ENCODE measurements at regions of chr6 and their contacts with region 1.

Region 1: DNA sequence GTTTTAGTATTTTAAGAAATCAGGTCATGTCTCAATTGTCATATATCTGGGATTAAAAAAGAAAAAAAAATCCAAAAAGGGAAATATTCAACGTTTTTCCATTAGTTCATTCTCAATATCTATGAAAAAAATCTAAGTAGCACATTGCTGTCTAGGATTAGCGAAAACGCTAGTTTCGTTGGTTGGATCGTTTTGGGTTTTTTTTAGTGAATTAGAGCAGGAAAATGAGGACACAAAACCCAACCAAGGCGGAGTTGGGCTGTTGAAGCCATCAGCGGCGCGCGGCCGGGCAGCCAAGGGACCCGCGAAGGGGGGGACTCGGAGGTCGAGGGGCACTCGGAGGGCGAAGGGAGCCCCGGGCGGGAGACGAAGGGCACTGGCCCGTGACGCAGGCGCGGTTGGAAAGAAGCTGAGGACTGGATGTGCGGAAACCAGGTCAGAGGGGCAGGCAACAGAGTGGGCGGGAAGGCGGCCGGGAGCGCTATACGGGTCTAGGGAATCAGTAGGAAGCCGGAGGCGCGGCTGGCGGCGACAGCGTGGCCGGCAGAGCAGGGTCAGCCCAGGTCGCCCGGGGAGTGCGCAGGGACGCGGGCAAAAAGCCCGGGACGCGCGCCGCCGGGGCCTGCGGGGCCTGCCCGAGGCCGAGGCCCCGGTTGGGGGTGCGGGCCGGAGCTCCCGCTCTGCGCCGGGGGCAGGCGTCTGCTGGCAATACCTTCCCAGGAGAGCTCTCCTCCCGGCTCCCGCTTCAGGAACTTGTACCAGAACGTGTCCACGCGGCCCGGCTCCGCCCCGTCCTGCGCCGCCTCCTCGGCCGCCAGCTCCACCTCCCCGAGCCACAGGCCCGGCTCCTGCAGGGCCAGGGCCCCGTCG is 599 bp downstream of the EPM2A start:
- DNase-seq: peak; percentile 70 to 88
- H3K4me3 ChIP-seq: peak overlapping the region; percentile 99
- H3K27ac ChIP-seq: peak overlapping the region; percentile 89
- H3K4me1 ChIP-seq: peaks cover 14% of the 10 kb centered on the region
- H3K27me3 ChIP-seq: no peaks in the 10 kb centered on the region
- CTCF ChIP-seq: no peak

Region 2: GRCh38 chr6:145745861-145746260 is 11.1 kb after region 1 on chr6:
- CTCF ChIA-PET with region 1: no interaction called
- POLR2A ChIA-PET with region 1: interaction called, 10 read pairs
- intact Hi-C with region 1: no loop called
- DNase-seq: no peak
- H3K4me3 ChIP-seq: no peak overlapping the region
- H3K27ac ChIP-seq: peak overlapping the region; percentile 27; the same call in 1 of the 2 replicates
- H3K4me1 ChIP-seq: peaks cover 31% of the 10 kb centered on the region
- H3K27me3 ChIP-seq: no peaks in the 10 kb centered on the region
- CTCF ChIP-seq: no peak

Region 3: DNA sequence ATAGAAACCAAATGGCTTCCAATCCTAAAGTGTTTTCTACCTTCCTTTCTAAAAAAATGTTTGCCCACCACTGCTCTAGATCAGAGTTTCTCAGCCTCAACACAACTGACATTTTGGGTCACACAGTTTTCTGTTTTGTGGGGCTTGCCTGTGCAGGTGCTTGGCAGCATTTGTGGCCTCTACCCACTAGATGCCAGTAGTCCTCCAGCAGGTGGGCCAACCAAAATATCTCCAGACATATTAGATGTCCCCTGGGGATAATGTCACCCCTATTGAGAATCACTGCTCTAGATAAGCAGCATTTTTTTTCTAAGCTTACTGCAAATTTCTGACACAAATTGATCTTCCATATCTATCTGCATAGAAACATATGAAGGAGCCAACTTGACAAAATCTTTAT is 26.9 kb after region 1 on chr6:
- CTCF ChIA-PET with region 1: no interaction called
- POLR2A ChIA-PET with region 1: no interaction called
- intact Hi-C with region 1: no loop called
- DNase-seq: no peak
- H3K4me3 ChIP-seq: no peak overlapping the region
- H3K27ac ChIP-seq: no peak overlapping the region
- H3K4me1 ChIP-seq: no peaks in the 10 kb centered on the region
- H3K27me3 ChIP-seq: no peaks in the 10 kb centered on the region
- CTCF ChIP-seq: no peak

Region 4: GRCh38 chr6:145814501-145815308 is 80.0 kb after region 1 on chr6 and contains the start of gene FBXO30:
- CTCF ChIA-PET with region 1: interaction called, 3 read pairs
- POLR2A ChIA-PET with region 1: interaction called, 6 read pairs
- intact Hi-C with region 1: loop called (anchors 1 kb)
- DNase-seq: peak; percentile 69 to 87
- H3K4me3 ChIP-seq: peak within 1 kb of the TSS; percentile 73
- H3K27ac ChIP-seq: peak within 1 kb of the TSS; percentile 86
- H3K4me1 ChIP-seq: peaks cover 42% of the 10 kb centered on the region
- H3K27me3 ChIP-seq: no peaks in the 10 kb centered on the region
- CTCF ChIP-seq: no peak
- total RNA-seq, gene FBXO30: 8.3 and 10.6 TPM in 2 replicates

Region 5: DNA sequence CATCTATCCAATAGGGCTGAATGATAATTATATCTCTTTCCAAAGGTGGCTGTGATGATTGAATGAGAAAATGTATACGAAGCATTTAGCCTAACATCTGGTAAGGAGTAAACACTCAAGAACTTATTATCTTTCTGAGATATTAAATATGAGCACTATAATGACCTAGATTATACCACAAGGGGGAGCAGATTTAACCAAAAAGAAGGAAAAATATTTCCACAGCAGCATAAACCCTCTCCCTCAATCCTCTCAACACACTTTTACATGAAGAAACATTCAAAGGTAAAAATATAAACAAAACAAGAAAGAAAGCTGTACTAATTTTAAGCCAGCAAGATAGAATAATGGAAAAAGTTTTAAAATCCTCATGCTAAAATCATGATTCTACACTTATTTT is 161.1 kb after region 1 on chr6:
- CTCF ChIA-PET with region 1: no interaction called
- POLR2A ChIA-PET with region 1: no interaction called
- intact Hi-C with region 1: loop called (anchors 5 kb)
- DNase-seq: peak in 1 of 2 experiments; percentile 37
- H3K4me3 ChIP-seq: no peak overlapping the region
- H3K27ac ChIP-seq: no peak overlapping the region
- H3K4me1 ChIP-seq: peaks cover 10% of the 10 kb centered on the region; the same call in 1 of the 2 replicates
- H3K27me3 ChIP-seq: no peaks in the 10 kb centered on the region
- CTCF ChIP-seq: peak; percentile 54

Region 6: GRCh38 chr6:146543211-146543939 is 808.7 kb after region 1 on chr6 and contains the start of gene RAB32:
- CTCF ChIA-PET with region 1: no interaction called
- POLR2A ChIA-PET with region 1: no interaction called
- intact Hi-C with region 1: no loop called
- DNase-seq: peak; percentile 73 to 90
- H3K4me3 ChIP-seq: peak within 1 kb of the TSS; percentile 96
- H3K27ac ChIP-seq: peak within 1 kb of the TSS; percentile 59
- H3K4me1 ChIP-seq: peaks cover 31% of the 10 kb centered on the region
- H3K27me3 ChIP-seq: no peaks in the 10 kb centered on the region
- CTCF ChIP-seq: peak; percentile 67; the same call in 1 of the 2 replicates
- total RNA-seq, gene RAB32: 21.4 and 22.6 TPM in 2 replicates